ENCODE measurements at regions of chr7 and their contacts with region 1.

Region 1: DNA sequence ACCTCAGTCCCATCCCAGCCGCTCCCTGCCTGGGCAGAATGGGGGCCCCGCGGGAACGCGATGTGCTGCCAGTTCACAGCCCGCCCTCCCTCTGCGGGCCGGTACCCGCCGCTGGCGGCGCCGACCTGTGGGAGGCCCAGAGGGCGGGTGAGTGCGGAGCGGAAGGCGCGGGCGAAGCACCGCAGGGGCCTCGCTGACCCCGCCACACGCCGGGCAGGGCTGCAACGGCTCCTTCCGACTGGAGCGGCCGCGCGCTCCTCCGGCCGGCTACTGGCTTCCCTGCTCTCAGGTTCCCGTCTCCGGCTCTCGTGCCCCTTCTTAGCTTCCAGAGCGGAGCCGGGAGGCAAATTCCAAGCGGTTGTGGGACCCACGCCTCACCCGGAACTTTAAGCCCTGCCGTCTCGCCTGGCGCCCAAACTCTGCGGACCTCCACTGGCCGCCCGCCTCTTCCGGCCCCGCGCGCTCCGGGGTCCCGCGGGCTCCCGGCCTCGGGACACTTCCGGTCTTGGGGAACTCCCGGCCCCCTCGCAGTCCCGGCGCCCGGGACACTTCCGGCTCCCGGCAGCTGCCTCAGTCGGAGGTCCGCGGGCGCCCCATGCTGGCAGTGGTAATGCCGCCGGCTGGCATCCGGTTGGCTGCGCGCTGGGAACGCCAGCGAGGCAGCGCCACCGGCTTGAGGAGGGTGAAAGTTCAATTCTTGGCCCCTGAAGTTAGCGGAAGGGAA is at the start of gene CYREN:
- DNase-seq: peak; percentile 90
- CTCF ChIP-seq: peak; percentile 86

Region 2: GRCh38 chr7:134986363-134987251 is 183.8 kb before region 1 on chr7 and contains the start of gene AGBL3:
- CTCF ChIA-PET with region 1: interaction called, 40 read pairs
- POLR2A ChIA-PET with region 1: no interaction called
- DNase-seq: peak; percentile 88
- CTCF ChIP-seq: peak; percentile 66

Region 3: DNA sequence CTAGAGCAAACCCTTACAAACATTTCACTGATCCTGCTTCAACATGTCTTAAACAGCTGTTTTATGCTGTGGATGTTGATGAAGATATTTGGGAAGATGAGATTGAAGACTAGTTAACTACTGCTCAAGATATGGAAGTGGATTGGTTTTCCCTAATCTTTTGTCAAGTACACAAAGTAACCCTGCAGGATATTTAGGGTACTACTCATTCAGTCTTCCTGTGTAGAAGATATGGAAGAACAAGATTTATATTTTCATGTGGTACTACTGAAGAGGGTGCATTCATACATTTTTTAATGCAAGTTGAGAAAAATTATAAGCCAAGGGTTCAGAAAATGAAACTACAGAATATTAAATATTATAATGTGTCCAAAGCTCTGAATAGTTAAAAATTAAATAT is 40.9 kb before region 1 on chr7:
- CTCF ChIA-PET with region 1: no interaction called
- POLR2A ChIA-PET with region 1: no interaction called
- DNase-seq: no peak
- CTCF ChIP-seq: no peak

Region 4: DNA sequence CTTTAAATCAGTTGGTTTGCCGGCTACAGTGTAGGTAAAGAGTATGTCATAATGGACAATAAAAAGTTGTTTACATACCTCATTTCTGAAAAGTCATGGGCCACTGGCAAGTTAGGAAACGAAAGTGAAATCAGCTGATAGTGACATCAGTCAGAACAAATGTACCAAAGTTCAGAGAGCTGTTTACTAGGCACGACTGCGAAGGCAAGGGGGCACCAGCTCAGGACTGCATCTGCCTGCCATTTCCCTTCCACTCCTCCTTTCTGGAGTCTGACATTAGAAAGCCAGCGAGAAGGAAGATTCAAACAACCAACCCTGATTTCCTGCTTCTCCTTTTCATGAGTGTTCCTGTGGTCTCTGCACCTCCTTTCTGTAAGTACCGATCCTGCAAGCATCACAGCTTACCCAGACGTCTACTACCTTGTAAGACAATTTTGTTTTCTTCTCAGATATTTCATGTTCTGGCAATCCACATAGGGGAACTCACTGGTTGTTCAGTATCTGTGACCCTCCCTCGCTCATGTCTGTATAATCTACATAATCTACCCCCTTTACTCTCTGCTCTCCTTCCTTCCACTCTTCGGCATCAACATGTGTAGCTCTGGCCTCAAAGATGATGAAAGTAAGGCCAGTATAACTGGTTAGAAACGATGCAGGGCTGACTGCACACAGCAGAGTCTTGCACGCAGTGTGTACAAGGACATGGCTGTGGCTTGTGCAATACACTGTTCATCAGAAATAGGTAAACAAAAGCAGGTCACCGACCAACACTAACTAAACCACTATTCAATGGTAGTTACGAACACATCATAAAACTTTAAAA is 22.3 kb before region 1 on chr7 and contains the start of gene TMEM140:
- CTCF ChIA-PET with region 1: interaction called, 38 read pairs
- POLR2A ChIA-PET with region 1: interaction called, 3 read pairs
- DNase-seq: peak; percentile 54
- CTCF ChIP-seq: no peak

Region 5: GRCh38 chr7:135186841-135187253 is 16.4 kb after region 1 on chr7:
- CTCF ChIA-PET with region 1: interaction called, 25 read pairs
- POLR2A ChIA-PET with region 1: interaction called, 6 read pairs
- DNase-seq: peak; percentile 80
- CTCF ChIP-seq: no peak

Region 6: DNA sequence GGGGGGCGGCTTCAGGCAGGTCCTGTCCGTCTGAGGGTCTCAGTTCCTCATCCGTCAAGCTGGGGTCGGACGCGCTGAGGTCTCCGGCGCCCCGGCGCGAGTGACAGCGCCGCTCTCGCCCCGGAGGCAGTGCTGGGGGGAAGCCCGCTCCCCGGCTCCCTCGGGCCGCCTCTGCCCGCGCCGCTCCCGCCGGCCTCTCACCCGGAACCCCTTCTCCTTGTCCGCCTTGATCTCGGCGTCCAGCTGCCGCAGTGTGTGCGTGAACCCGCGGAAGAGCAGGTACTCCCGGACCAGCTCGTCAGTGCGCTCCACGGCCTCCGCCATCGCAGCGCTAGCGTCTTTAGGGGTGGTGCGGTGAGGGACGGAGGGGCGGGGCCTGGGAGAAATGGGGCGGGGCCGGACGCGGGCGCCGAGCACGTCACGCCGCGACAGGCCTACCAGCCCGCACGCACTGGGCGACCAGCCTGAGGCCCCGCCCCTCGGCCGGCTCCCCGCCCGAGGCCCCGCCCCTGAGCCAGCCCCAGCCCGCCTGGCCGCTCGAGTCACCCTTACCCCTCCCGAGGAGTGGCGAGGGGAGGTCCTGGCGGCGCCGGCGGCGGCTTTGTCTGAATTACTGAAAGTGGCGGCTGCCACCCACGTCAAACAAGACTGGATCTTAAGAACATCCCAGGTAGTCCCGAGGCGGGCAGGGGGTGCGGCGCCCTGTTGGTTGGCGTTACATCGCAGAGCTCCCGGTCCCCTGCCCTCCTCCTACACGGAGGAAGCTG is 40.9 kb after region 1 on chr7 and contains the start of gene WDR91:
- CTCF ChIA-PET with region 1: interaction called, 13 read pairs
- POLR2A ChIA-PET with region 1: no interaction called
- DNase-seq: peak; percentile 100
- CTCF ChIP-seq: peak; percentile 1

Region 7: DNA sequence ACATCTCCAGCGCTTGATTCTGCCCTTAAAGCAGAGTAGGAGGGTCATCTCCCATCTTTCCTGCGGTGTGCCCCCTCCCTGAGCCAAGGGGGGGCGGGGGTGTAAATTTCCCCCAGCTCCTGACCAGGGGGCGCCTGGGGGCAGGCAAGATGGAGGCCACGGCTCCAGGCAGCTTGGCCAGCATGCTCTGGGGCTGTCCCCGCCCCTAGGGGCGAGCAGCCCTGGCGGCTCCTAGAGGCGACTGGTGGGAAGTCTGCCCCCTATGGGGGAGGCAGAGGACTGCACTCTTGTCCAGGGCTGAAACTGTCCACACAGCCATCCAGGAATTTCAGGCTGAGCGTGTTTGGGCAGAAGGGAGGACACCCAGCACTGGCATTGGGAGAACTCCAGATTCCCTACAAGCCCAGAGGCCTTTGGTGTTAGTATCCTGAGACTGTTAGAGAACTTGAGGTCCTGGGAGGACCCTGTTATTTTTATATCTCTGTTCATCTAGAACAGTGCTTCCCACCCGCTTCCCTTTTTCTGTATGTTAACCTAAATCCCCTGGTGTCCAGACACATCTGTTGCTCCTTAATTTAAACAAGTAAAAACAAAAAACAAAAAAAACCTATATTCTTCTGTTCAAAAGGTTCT is 67.8 kb after region 1 on chr7:
- CTCF ChIA-PET with region 1: no interaction called
- POLR2A ChIA-PET with region 1: no interaction called
- DNase-seq: no peak
- CTCF ChIP-seq: peak; percentile 18

Measured in GM10248 (cell line).